Esophagus squamous epithelium (tissue), 5 donors: ENCODE measurements at regions of chr2 and their contacts with region 1.

Region 1: DNA sequence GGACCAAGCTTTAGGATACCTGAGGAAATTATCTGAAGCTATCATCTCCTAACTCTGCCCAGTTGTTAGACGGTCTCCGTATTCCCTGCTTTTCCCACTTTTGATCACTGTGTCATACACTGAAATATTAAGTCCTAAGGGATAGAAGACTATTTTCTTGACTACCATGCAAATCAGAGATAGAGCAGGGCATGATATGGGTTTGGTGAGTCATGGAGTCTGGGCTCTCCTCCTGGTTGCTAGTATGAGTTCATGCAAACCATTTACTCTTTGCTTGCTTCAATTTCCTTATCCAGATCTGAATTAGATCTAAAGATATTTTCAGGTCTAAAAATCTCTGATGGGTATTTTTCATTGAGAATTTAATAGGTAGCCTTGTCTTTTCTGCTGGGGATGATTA is 55.0 kb downstream of the EHBP1 start:
- DNase-seq: no peak
- H3K4me3 ChIP-seq: no peak overlapping the region
- H3K27ac ChIP-seq: no peak overlapping the region
- H3K4me1 ChIP-seq: peaks cover 0 to 42% (median 5%) of the 10 kb centered on the region in 3 donors
- H3K27me3 ChIP-seq: no peaks in the 10 kb centered on the region
- CTCF ChIP-seq: no peak
- POLR2A ChIP-seq: no peak

Region 2: DNA sequence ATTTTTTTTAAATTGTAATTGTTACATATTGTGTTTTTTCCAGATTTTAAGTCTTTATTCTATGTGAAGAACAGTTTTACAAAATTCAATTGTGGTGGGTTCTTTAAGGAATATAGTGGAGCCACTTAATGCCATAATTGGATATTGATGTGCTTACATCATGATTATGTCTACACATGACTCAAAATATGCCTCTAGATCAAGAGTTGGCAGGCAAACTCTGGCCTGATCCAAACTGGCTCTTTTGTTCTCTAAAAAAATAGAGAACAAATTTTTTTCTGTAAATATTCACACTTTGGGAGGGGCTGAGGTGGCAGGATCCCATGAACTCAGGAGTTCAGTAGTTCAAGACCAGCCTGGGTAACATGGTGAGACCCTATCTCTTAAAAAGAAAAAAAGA is 46.7 kb before region 1 on chr2:
- intact Hi-C with region 1: loop called (anchors 10 kb)
- DNase-seq: no peak
- H3K4me3 ChIP-seq: no peak overlapping the region
- H3K27ac ChIP-seq: no peak overlapping the region
- H3K4me1 ChIP-seq: peaks cover 0 to 62% (median 14%) of the 10 kb centered on the region in 3 donors
- H3K27me3 ChIP-seq: no peaks in the 10 kb centered on the region
- CTCF ChIP-seq: no peak
- POLR2A ChIP-seq: no peak

Region 3: GRCh38 chr2:62884514-62884913 is 124.0 kb after region 1 on chr2:
- intact Hi-C with region 1: no loop called
- DNase-seq: no peak
- H3K4me3 ChIP-seq: no peak overlapping the region
- H3K27ac ChIP-seq: no peak overlapping the region
- H3K4me1 ChIP-seq: peaks cover 0 to 14% (median 0%) of the 10 kb centered on the region in 3 donors
- H3K27me3 ChIP-seq: no peaks in the 10 kb centered on the region
- CTCF ChIP-seq: no peak
- POLR2A ChIP-seq: no peak